T-cell (primary cell): ENCODE measurements at regions of chr3 and their contacts with region 1.

Region 1: DNA sequence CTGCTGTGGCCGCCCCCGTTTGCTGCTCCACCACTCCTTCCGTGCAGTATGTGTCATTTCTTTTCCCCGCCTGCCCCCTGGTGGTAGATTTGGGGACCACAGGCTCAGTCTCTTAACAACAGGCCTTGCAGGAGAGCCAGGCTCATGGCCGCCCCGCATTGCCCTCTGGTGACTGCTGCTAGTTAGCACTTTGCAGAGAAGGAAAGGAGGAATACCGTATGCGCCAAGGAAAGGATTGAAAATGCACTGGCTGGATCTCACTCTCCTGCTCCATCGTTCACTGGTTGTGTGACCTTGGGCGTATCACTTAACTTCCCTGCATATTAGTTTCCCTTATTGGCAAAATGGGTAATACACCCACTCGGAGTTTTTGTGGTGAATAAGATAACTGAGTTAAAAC is 39.3 kb upstream of the PXYLP1 start:
- DNase-seq: peak; percentile 84 to 99 (median 94)
- ATAC-seq: peak; percentile 100
- H3K4me3 ChIP-seq: no peak overlapping the region
- H3K4me3 Mint-ChIP-seq: no peak overlapping the region
- H3K27ac ChIP-seq: no peak overlapping the region
- H3K27ac Mint-ChIP-seq: peak overlapping the region in 1 of 2 donors; percentile 13
- H3K4me1 ChIP-seq: peaks cover 6 to 9% of the 10 kb centered on the region in 2 experiments
- H3K4me1 Mint-ChIP-seq: peaks cover 9 to 11% (median 10%) of the 10 kb centered on the region in 3 donors
- H3K27me3 ChIP-seq: peaks cover 0 to 23% of the 10 kb centered on the region in 2 experiments
- H3K27me3 Mint-ChIP-seq: peaks cover 9 to 12% of the 10 kb centered on the region in 2 donors

Region 2: GRCh38 chr3:141000027-141000663 is 192.2 kb before region 1 on chr3:
- CTCF ChIA-PET with region 1: interaction called, 3 to 11 read pairs
- POLR2A ChIA-PET with region 1: no interaction called
- DNase-seq: peak in 32 of 35 experiments; percentile 7 to 66 (median 40)
- ATAC-seq: peak; percentile 64 to 90 (median 85)
- H3K4me3 ChIP-seq: no peak overlapping the region
- H3K4me3 Mint-ChIP-seq: no peak overlapping the region
- H3K27ac ChIP-seq: no peak overlapping the region
- H3K27ac Mint-ChIP-seq: no peak overlapping the region
- H3K4me1 ChIP-seq: no peaks in the 10 kb centered on the region
- H3K4me1 Mint-ChIP-seq: peaks cover 0 to 7% (median 5%) of the 10 kb centered on the region in 3 donors
- H3K27me3 ChIP-seq: peaks cover 0 to 3% of the 10 kb centered on the region in 2 experiments
- H3K27me3 Mint-ChIP-seq: peaks cover 2 to 3% of the 10 kb centered on the region in 2 donors